ENCODE measurements at regions of chr3 and their contacts with region 1.

Region 1: GRCh38 chr3:157201648-157202278 is 41.8 kb upstream of the CCNL1 start:
- DNase-seq: no peak
- H3K4me3 ChIP-seq: no peak overlapping the region
- H3K27ac ChIP-seq: no peak overlapping the region
- H3K4me1 ChIP-seq: peaks cover 0 to 4% (median 0%) of the 10 kb centered on the region in 4 donors
- H3K27me3 ChIP-seq: no peaks in the 10 kb centered on the region
- CTCF ChIP-seq: peak; percentile 27 to 57

Region 2: DNA sequence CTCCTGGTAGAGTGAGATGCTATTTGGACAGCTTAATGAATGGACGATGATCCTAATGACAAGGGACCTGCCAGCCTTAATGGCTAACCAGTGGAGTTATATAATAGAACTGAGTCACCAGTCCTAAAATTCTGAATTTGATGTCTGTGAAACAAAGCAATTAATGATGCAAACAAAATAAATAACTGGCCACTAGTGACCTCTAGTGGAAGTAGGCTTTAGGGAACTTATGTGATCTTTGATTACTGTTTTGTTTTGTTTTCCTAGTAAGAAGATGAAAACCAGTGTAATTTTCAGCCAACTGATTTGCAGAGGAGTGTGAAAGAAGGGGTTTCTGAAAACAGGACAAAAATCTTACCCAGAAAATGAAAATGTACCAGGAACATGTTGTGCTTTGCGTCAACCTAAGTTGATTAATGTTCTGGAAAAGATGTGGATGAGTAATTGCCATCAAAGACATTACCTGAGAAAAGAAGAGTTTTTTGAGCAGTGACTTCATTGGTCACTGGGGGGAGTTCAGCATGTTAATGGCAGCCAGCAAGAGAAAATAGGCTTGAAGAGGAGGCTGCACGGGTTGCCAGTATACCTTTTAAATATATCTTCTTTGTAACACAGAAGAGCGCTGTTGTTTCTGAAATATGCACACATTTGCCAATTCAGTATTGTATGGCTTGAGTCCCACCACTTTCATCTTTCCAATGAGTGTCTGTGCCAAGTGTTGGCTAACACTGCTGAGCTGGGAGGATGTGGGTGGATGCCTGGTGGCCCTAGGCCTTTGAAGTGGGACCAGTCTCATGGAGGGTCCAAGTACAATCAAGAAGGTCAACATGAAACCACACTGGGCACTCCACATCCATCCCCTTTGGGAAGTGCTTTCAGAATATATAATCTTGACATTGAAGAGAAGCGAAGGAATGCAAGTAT is 292.1 kb after region 1 on chr3:
- intact Hi-C with region 1: loop called (anchors 10 kb)
- DNase-seq: no peak
- H3K4me3 ChIP-seq: no peak overlapping the region
- H3K27ac ChIP-seq: no peak overlapping the region
- H3K4me1 ChIP-seq: no peaks in the 10 kb centered on the region
- H3K27me3 ChIP-seq: no peaks in the 10 kb centered on the region
- CTCF ChIP-seq: peak; percentile 45 to 55